ENCODE measurements at regions of chr10 and their contacts with region 1.

Region 1: GRCh38 chr10:22436884-22437619 is 91.8 kb downstream of the SPAG6 start:
- DNase-seq: peak; percentile 67
- H3K4me3 Mint-ChIP-seq: peak overlapping the region; percentile 76
- H3K27ac Mint-ChIP-seq: peak overlapping the region; percentile 89
- H3K4me1 Mint-ChIP-seq: peaks cover 20% of the 10 kb centered on the region
- H3K27me3 Mint-ChIP-seq: no peaks in the 10 kb centered on the region
- CTCF ChIP-seq: no peak

Region 2: DNA sequence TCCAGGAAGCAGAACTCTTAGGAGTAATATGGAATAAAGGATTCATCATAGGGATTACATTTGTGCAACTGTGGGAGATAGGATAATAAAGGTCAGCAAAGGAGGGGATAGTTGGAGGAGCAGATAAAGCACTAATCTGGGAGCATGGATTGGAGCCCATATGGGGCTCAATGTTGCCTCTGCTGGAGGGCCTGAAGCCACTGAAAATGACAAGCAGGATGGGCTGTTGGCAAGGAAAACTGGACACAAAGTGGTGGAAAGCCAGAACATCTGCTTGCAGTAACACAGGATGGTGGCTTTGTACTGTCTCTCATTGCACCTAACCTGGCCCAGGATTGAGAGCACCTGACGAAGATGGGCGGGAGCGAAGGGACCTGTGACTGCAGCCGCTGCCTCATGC is 135.9 kb before region 1 on chr10:
- CTCF ChIA-PET with region 1: no interaction called
- POLR2A ChIA-PET with region 1: no interaction called
- intact Hi-C with region 1: no loop called
- DNase-seq: no peak
- H3K4me3 Mint-ChIP-seq: no peak overlapping the region
- H3K27ac Mint-ChIP-seq: no peak overlapping the region
- H3K4me1 Mint-ChIP-seq: no peaks in the 10 kb centered on the region
- H3K27me3 Mint-ChIP-seq: no peaks in the 10 kb centered on the region
- CTCF ChIP-seq: no peak

Region 3: GRCh38 chr10:22823109-22823508 is 386.1 kb after region 1 on chr10:
- CTCF ChIA-PET with region 1: no interaction called
- POLR2A ChIA-PET with region 1: no interaction called
- intact Hi-C with region 1: loop called (anchors 5 kb)
- DNase-seq: peak; percentile 70
- H3K4me3 Mint-ChIP-seq: no peak overlapping the region
- H3K27ac Mint-ChIP-seq: peak overlapping the region; percentile 19
- H3K4me1 Mint-ChIP-seq: peaks cover 15% of the 10 kb centered on the region
- H3K27me3 Mint-ChIP-seq: no peaks in the 10 kb centered on the region
- CTCF ChIP-seq: no peak

Measured in MCF 10A (cell line).